Heart left ventricle (tissue), 16 donors: ENCODE measurements at regions of chr1 and their contacts with region 1.

Region 1: DNA sequence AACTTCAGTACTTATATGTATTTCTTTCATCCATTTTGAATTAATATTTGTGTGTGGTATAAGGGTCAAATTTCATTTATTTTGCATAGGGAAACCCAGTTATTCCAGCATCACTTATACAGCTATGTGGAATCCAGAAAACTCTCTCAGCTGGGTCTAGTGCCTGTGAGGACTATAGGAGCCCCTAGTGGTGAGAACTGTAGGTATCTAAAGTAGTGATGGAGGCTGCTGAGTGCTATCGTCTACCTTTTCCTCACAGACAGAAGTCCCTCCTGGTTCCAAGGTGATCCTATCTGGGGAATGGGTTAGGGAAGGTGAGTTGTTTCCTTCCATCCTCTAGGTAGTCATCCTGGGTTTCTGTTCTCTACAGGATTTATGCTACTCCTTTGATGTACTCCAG is 352.0 kb upstream of the C1orf87 start:
- DNase-seq: no peak
- ATAC-seq: no peak
- H3K4me3 ChIP-seq: no peak overlapping the region
- H3K27ac ChIP-seq: no peak overlapping the region
- H3K4me1 ChIP-seq: peaks cover 0 to 4% (median 0%) of the 10 kb centered on the region in 12 donors
- H3K27me3 ChIP-seq: no peaks in the 10 kb centered on the region
- CTCF ChIP-seq: peak in 4 of 12 donors; percentile 14 to 21 (median 19)
- POLR2A ChIP-seq: no peak

Region 2: DNA sequence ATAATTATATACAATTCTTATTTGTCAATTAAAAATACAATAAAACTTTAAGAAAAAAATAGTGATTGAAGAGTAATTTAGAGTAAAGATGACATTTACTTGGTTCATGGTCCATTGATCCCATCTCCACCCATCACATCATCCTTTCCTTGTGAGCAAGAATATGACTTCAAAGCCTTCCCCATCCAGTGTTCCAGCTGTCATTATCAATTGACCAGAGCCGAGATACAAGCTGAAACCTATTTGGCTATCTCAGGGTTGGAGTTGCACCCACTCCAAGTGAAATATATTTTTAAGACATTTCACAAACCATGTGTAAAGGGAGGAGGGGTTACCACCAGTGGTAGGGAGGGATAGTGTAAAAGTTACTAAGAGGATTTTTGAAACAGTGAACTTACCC is 77.0 kb after region 1 on chr1:
- intact Hi-C with region 1: no loop called
- DNase-seq: no peak
- ATAC-seq: no peak
- H3K4me3 ChIP-seq: no peak overlapping the region
- H3K27ac ChIP-seq: no peak overlapping the region
- H3K4me1 ChIP-seq: no peaks in the 10 kb centered on the region
- H3K27me3 ChIP-seq: no peaks in the 10 kb centered on the region
- CTCF ChIP-seq: no peak
- POLR2A ChIP-seq: no peak

Region 3: GRCh38 chr1:60615666-60616065 is 190.1 kb after region 1 on chr1:
- intact Hi-C with region 1: loop called in 1 of 10 experiments (anchors 10 kb)
- DNase-seq: no peak
- ATAC-seq: no peak
- H3K4me3 ChIP-seq: no peak overlapping the region
- H3K27ac ChIP-seq: no peak overlapping the region
- H3K4me1 ChIP-seq: peaks cover 0 to 13% (median 4%) of the 10 kb centered on the region in 12 donors
- H3K27me3 ChIP-seq: no peaks in the 10 kb centered on the region
- CTCF ChIP-seq: no peak
- POLR2A ChIP-seq: no peak